ENCODE measurements at regions of chr11 and their contacts with region 1.

Region 1: DNA sequence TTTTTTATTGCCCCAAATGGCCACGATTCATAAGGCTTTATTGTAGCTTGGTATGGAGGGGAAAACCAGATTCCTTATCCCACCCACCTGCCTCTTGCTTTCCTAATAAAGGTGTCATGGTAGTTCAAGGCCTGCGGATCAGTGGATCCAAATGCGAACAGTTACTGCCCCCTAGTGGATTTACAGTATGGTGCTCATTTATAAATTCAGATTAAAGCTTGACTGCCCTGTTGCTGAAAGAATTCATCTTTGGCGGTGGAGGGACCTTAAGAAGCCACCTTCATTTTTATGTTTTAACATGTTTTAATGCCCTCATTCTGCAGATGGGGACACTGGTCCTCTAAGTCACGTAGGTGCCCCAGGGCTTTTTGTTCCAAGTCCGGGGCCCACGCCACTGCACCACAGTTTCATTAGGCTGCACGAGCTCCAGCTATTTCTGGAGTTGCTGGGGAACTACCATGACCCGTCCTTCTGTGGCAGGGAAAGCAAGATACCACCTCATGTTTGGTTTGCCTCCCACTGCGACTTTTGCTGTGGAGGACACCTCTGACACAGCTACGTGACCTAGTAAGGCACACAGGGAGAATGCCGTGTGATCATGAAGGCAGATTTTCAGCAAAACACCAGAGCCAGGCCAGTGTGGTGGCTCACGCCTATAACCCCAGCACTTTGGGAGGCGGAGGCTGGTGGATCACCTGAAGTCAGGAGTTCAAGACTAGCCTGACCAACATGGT is 15.6 kb upstream of the INCENP start:
- DNase-seq: peak; percentile 52
- ATAC-seq: peak; percentile 83
- H3K4me3 ChIP-seq: no peak overlapping the region
- H3K27ac ChIP-seq: no peak overlapping the region
- H3K4me1 ChIP-seq: peaks cover 6% of the 10 kb centered on the region; the same call in 1 of the 2 replicates
- H3K27me3 ChIP-seq: no peaks in the 10 kb centered on the region
- CTCF ChIP-seq: peak; percentile 87

Region 2: DNA sequence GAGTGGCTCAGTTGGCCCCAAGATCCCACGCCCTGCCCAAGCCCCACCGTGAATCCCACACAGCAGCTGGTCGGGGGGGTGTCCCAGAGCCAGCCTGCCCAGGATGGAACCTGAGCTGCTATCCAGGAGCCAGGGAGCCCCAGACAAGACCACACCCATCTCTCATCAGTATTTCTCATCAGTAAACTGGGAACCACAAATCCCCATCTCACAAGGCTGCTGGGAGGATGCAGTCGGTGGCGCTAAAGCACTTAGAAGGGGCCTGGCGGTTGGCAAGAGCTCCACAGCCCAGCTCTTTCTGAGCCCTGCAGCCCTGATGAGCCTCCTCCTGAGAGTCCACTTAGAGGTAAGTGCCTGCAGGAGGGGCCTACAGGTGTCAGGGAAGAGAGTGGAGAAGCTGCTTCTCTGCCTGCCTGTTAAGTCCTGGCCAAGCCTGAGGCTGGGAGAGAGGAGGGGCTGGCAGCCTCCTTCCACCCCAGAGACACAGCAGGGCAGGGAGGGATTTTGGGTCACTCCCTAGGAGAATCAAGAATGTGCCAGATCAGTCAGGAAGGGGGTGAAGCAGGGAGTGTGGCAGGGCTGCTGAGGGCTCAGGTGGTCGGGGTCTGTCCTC is 222.9 kb before region 1 on chr11:
- CTCF ChIA-PET with region 1: interaction called, 11 read pairs
- POLR2A ChIA-PET with region 1: interaction called, 3 read pairs
- in situ Hi-C with region 1: no loop called
- intact Hi-C with region 1: no loop called
- DNase-seq: no peak
- ATAC-seq: 0 out of 2 replicates have a peak, but pooled peaks have one; percentile 10
- H3K4me3 ChIP-seq: no peak overlapping the region
- H3K27ac ChIP-seq: no peak overlapping the region
- H3K4me1 ChIP-seq: peaks cover 3% of the 10 kb centered on the region
- H3K27me3 ChIP-seq: no peaks in the 10 kb centered on the region
- CTCF ChIP-seq: no peak

Region 3: GRCh38 chr11:61899146-61899841 is 208.9 kb before region 1 on chr11:
- CTCF ChIA-PET with region 1: interaction called, 36 read pairs
- POLR2A ChIA-PET with region 1: no interaction called
- in situ Hi-C with region 1: no loop called
- intact Hi-C with region 1: loop called (anchors 2 kb)
- DNase-seq: peak; percentile 41
- ATAC-seq: peak; percentile 86
- H3K4me3 ChIP-seq: no peak overlapping the region
- H3K27ac ChIP-seq: no peak overlapping the region
- H3K4me1 ChIP-seq: no peaks in the 10 kb centered on the region
- H3K27me3 ChIP-seq: no peaks in the 10 kb centered on the region
- CTCF ChIP-seq: peak; percentile 99

Region 4: GRCh38 chr11:62132188-62132587 is 24.0 kb after region 1 on chr11:
- CTCF ChIA-PET with region 1: no interaction called
- POLR2A ChIA-PET with region 1: no interaction called
- in situ Hi-C with region 1: no loop called
- intact Hi-C with region 1: no loop called
- DNase-seq: no peak
- ATAC-seq: peak; percentile 47
- H3K4me3 ChIP-seq: no peak overlapping the region
- H3K27ac ChIP-seq: no peak overlapping the region
- H3K4me1 ChIP-seq: no peaks in the 10 kb centered on the region
- H3K27me3 ChIP-seq: no peaks in the 10 kb centered on the region
- CTCF ChIP-seq: no peak

Region 5: DNA sequence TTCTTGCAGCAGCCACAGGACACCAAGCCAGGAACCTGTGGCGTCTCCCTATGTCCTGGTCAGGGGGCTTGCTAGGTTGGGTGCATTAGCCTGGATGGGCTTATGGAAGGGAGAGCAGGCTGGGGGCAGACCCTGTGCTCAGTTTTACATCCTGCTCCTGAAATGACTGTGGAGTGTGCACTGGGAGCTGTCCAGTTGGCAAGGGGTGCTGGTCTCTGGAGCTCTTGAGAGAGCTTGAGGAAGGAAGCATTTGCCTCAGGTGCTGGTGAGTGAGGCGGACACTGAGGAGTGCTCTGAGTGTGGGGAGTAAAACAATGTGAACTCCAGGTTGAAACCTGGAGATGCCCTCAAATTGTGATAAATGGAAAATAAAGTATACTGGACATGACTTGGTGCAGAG is 187.3 kb after region 1 on chr11:
- CTCF ChIA-PET with region 1: no interaction called
- POLR2A ChIA-PET with region 1: no interaction called
- in situ Hi-C with region 1: no loop called
- intact Hi-C with region 1: no loop called
- DNase-seq: no peak
- ATAC-seq: no peak
- H3K4me3 ChIP-seq: no peak overlapping the region
- H3K27ac ChIP-seq: no peak overlapping the region
- H3K4me1 ChIP-seq: no peaks in the 10 kb centered on the region
- H3K27me3 ChIP-seq: peaks cover 16% of the 10 kb centered on the region
- CTCF ChIP-seq: no peak